ENCODE measurements at regions of chr10 and their contacts with region 1.

Region 1: GRCh38 chr10:30463944-30464451 is 30.0 kb downstream of the MAP3K8 start:
- DNase-seq: no peak
- H3K4me3 ChIP-seq: no peak overlapping the region
- H3K27ac ChIP-seq: peak overlapping the region in 1 of 2 donors; percentile 12
- H3K4me1 ChIP-seq: no peaks in the 10 kb centered on the region
- H3K27me3 ChIP-seq: no peaks in the 10 kb centered on the region
- CTCF ChIP-seq: no peak

Region 2: DNA sequence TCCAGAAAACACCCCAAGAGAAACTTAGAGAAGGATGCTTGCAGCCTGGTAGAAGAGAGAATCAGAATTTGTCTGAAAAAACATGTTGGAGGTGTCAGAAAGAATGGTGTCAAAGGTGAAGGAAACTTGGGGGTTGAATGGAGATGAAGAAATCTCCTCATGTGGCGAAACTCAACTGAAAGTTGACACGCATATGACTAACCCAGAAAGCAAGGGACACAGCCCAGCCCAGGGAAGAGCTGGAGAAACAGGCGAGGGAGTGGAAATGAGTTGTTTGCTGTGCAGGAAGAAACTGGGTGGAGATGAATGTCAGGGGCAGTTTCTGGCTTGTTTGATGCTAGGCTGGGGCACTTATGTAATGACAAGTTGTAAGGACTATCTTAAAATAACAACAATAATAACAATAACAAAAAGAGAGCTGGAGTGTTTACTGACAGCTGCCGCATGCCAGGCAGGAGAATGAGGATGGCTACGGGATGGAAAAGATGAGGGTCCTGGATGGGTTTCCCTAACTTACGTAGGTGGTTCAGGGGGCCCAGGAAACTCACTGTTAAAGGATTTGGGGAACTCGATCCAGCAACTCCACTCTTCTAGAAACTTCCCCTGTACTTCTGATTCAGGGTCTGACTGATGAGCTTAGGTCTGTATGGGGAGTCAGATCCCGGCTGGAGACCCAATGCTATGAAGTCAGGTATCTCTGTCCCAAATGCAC is 27.4 kb after region 1 on chr10:
- intact Hi-C with region 1: loop called (anchors 1 kb)
- DNase-seq: peak in 1 of 2 donors; percentile 59
- H3K4me3 ChIP-seq: no peak overlapping the region
- H3K27ac ChIP-seq: no peak overlapping the region
- H3K4me1 ChIP-seq: peaks cover 0 to 6% of the 10 kb centered on the region in 2 donors
- H3K27me3 ChIP-seq: no peaks in the 10 kb centered on the region
- CTCF ChIP-seq: no peak

Measured in ascending aorta (tissue), 2 donors.